Calu3 (cell line): ENCODE measurements at regions of chr1 and their contacts with region 1.

Region 1: DNA sequence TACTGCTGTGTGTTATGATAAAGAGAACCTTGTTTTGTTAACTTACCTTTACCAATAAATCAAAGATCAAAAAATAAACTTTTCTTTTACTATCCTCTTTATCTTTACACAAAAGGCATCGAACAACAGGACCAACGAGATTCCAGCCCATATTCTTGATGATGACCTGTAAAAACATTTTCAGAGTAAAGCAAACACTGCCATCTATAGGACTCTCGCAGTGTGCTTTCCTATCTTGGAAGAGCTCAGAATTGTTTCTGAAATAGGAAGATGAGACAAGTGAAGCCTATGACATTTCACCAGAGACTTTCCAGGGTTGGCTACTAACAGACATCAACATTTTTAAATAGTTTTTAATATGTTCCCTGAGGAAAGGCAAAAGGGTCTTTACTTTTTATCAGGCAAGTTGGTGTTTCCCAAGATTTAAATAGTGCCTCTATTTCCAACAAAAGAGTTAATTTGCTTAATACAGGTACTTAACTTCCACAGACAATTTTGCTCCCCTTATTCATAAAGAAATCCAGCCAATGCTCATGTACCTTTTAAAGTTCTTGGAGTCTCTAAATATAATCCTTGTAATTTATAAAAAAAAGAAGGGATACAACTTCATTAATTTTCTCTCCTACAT is 7.3 kb downstream of the GLMN start:
- DNase-seq: no peak
- H3K4me3 Mint-ChIP-seq: no peak overlapping the region
- H3K27ac Mint-ChIP-seq: no peak overlapping the region
- H3K4me1 Mint-ChIP-seq: no peaks in the 10 kb centered on the region
- H3K27me3 Mint-ChIP-seq: no peaks in the 10 kb centered on the region
- CTCF ChIP-seq: peak; percentile 40

Region 2: DNA sequence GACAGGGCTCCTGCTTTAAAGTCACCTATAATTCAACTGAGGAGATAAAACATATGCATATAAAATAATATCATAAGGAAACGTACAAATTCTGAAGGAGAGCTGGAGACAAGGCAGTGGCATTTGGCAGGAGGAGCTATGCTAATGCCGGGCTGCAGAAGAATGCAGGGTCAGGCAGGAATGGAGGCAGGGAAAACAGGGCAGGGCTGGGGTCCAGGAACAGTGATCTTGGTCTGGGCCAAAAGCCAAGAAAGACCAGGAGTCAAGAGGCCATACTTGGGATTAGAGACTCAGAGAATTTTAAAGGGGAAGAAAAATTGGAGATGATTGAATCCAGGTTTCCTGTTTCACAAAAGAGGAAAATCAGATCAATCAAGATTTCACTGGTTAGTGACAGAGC is 362.2 kb before region 1 on chr1:
- CTCF ChIA-PET with region 1: interaction called, 6 read pairs
- intact Hi-C with region 1: loop called (anchors 5 kb)
- DNase-seq: peak; percentile 16
- H3K4me3 Mint-ChIP-seq: no peak overlapping the region
- H3K27ac Mint-ChIP-seq: no peak overlapping the region
- H3K4me1 Mint-ChIP-seq: peaks cover 17% of the 10 kb centered on the region
- H3K27me3 Mint-ChIP-seq: no peaks in the 10 kb centered on the region
- CTCF ChIP-seq: no peak

Region 3: GRCh38 chr1:91997607-91998195 is 293.8 kb before region 1 on chr1:
- CTCF ChIA-PET with region 1: interaction called, 27 read pairs
- intact Hi-C with region 1: loop called (anchors 2 kb)
- DNase-seq: peak; percentile 45
- H3K4me3 Mint-ChIP-seq: no peak overlapping the region
- H3K27ac Mint-ChIP-seq: no peak overlapping the region
- H3K4me1 Mint-ChIP-seq: no peaks in the 10 kb centered on the region
- H3K27me3 Mint-ChIP-seq: no peaks in the 10 kb centered on the region
- CTCF ChIP-seq: peak; percentile 22

Region 4: DNA sequence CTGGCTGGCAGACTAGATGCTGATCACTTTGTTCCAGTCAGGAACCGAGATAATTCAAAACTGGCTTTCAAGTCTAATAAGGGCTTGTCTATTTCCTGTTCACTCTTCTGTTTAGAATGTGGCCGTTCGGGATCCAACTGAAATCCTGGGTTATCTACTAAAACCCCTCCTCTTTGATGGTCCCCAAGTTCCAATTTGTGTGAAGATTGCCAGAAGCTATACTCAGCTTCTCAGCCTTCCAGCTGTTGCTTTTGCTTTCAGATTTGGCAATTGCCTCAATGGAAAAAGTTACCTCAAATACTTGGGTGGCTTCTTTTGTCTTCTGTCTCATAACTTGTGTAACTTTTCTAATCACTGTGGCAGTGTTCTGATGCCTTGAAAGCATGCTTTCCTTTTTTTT is 167.6 kb before region 1 on chr1:
- CTCF ChIA-PET with region 1: no interaction called
- intact Hi-C with region 1: no loop called
- DNase-seq: no peak
- H3K4me3 Mint-ChIP-seq: no peak overlapping the region
- H3K27ac Mint-ChIP-seq: no peak overlapping the region
- H3K4me1 Mint-ChIP-seq: no peaks in the 10 kb centered on the region
- H3K27me3 Mint-ChIP-seq: no peaks in the 10 kb centered on the region
- CTCF ChIP-seq: no peak